ENCODE measurements at regions of chr6 and their contacts with region 1.

Region 1: GRCh38 chr6:26342106-26343004 is 22.6 kb upstream of the BTN3A2 start:
- DNase-seq: no peak
- H3K4me3 Mint-ChIP-seq: peak overlapping the region; percentile 84
- H3K27ac Mint-ChIP-seq: peak overlapping the region; percentile 53
- H3K4me1 Mint-ChIP-seq: peaks cover 27% of the 10 kb centered on the region
- H3K27me3 Mint-ChIP-seq: peaks cover 7% of the 10 kb centered on the region

Region 2: DNA sequence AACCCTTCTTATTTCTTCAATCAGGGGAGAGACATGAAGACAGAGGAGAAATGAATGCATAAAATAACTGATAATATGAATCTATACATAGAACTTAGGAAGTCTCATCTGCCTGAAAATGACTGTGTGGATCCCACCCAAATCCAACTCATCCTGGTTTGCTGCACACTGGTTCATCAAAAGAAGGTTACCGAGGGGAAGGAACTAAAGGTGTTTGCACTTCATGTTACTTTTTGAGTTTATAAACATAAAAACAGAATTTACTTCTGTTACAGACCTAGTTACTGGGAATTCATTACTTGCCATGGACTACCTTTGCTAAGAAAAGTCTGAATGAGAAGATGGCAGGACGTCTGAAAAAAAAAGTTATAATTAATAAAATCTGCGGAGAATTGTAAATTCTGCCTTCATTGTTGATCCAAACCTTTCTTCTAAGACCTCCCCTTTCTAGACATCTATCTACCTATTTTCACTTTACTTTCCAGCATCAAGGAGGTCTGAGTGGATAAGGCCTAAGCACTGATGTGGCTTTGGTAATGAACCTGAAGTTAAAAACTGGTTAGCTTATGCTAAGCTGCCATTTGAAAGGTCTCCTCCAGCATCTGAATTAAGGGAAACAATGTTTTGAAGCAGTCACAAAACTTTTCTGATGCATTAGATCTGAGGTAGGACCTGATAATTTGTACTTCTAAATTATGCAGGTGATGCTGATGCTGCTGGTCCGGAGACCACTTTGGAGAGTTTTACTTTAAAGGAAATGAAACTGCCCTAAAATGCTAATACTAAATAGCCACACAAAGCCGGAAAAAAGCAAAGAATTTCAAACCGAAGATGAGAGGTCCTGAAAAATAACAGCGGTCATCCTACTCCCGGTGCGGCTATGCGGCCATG is 171.2 kb before region 1 on chr6:
- intact Hi-C with region 1: no loop called
- DNase-seq: no peak
- H3K4me3 Mint-ChIP-seq: peak overlapping the region; percentile 85
- H3K27ac Mint-ChIP-seq: peak overlapping the region; percentile 93
- H3K4me1 Mint-ChIP-seq: peaks cover 61% of the 10 kb centered on the region
- H3K27me3 Mint-ChIP-seq: no peaks in the 10 kb centered on the region

Region 3: DNA sequence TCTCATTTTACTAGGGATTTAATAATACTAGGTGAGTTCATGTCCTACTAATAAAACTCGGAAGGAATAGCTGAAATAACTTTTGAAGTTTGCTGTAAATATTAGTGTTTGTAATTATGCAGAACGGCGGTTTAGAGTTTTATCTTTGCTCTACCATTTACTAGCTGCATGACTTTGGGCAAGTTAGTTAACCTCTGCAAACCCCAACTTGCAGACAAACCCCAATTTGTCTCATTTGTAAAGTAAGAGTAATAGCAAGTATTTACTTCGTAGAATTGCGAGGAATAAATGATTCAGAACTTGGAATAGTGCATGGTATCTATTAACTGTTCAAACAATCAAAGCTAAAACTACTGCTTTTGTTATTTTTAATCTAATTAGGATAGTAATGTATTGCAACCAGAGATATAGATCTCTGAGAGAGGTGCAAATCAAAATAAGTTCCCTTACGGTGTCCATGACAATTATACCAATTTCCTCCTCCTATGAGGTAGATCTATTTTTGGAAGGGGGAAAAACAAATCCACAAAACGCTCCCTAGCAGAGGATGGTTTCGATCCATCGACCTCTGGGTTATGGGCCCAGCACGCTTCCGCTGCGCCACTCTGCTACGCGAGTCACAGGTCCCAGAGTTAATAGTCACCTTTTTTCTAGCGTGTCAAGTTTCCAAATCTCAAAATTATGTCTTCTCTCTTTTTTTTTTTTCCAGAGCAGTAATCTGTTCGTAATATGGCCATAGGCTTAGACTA is 12.4 kb before region 1 on chr6:
- intact Hi-C with region 1: loop called (anchors 1 kb)
- DNase-seq: peak; percentile 48
- H3K4me3 Mint-ChIP-seq: peak overlapping the region; percentile 82
- H3K27ac Mint-ChIP-seq: peak overlapping the region; percentile 93
- H3K4me1 Mint-ChIP-seq: peaks cover 58% of the 10 kb centered on the region
- H3K27me3 Mint-ChIP-seq: peaks cover 23% of the 10 kb centered on the region

Region 4: DNA sequence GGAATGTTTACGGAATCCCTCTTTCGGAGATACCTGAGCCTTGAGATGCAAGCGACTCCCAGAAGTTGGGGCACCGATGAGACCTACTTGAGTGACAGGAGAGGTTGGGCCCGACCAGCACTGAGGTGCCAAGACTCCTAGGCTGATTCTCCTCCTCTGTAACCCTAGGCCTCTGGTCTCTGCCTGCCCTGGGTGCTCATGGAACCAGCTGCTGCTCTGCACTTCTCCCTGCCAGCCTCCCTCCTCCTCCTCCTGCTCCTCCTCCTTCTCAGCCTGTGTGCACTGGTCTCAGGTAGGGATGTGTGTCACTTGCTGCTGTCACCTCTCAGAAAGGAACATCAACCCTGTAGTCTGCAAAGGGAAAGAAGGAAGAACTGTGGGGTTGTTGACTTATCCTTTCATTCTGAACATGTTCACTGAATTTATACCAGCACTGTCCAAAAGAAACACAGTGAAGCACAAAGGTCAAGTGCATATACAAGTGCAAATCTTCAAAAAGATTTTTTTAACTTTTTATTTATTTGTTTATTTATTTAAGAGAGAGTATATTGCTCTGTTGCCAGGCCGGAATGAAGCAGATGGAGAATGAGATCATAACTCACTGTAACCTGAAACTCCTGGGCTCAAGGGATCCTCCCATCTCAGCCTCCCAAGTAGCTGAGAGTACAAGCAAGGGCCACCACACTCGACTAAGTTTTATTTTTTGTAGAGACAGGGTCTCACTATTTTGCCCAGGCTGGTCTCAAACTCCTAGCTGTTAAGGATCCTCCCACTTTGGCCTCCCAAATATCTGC is 41.5 kb after region 1 on chr6:
- intact Hi-C with region 1: loop called (anchors 5 kb)
- DNase-seq: no peak
- H3K4me3 Mint-ChIP-seq: peak overlapping the region; percentile 95
- H3K27ac Mint-ChIP-seq: peak overlapping the region; percentile 90
- H3K4me1 Mint-ChIP-seq: peaks cover 57% of the 10 kb centered on the region
- H3K27me3 Mint-ChIP-seq: no peaks in the 10 kb centered on the region

Region 5: GRCh38 chr6:26421259-26422144 is 79.1 kb after region 1 on chr6:
- intact Hi-C with region 1: loop called (anchors 1 kb)
- DNase-seq: peak; percentile 37
- H3K4me3 Mint-ChIP-seq: no peak overlapping the region
- H3K27ac Mint-ChIP-seq: no peak overlapping the region
- H3K4me1 Mint-ChIP-seq: peaks cover 4% of the 10 kb centered on the region
- H3K27me3 Mint-ChIP-seq: no peaks in the 10 kb centered on the region

Region 6: GRCh38 chr6:26553635-26554446 is 211.5 kb after region 1 on chr6:
- intact Hi-C with region 1: loop called (anchors 1 kb)
- DNase-seq: peak; percentile 72
- H3K4me3 Mint-ChIP-seq: no peak overlapping the region
- H3K27ac Mint-ChIP-seq: no peak overlapping the region
- H3K4me1 Mint-ChIP-seq: peaks cover 18% of the 10 kb centered on the region
- H3K27me3 Mint-ChIP-seq: peaks cover 2% of the 10 kb centered on the region

Region 7: GRCh38 chr6:26596579-26597388 is 254.4 kb after region 1 on chr6 and contains the start of gene ABT1:
- intact Hi-C with region 1: loop called (anchors 1 kb)
- DNase-seq: peak; percentile 97
- H3K4me3 Mint-ChIP-seq: no peak within 1 kb of the TSS
- H3K27ac Mint-ChIP-seq: no peak within 1 kb of the TSS
- H3K4me1 Mint-ChIP-seq: peaks cover 39% of the 10 kb centered on the region
- H3K27me3 Mint-ChIP-seq: peaks cover 27% of the 10 kb centered on the region
- total RNA-seq, gene ABT1: 32.6 and 32.9 TPM in 2 replicates